Endothelial cell of umbilical vein (primary cell): ENCODE measurements at regions of chr21 and their contacts with region 1.

Region 1: GRCh38 chr21:31731802-31732596 is at the start of gene SCAF4:
- DNase-seq: peak; percentile 88
- H3K4me3 ChIP-seq: peak within 1 kb of the TSS; percentile 72 to 95 (median 79)
- H3K27ac ChIP-seq: peak within 1 kb of the TSS; percentile 66
- H3K4me1 ChIP-seq: peaks cover 28% of the 10 kb centered on the region
- H3K27me3 ChIP-seq: no peaks in the 10 kb centered on the region
- CTCF ChIP-seq: no peak
- POLR2A ChIP-seq: peak; percentile 89
- total RNA-seq, gene SCAF4: 41.2 and 42.0 TPM in 2 replicates

Region 2: GRCh38 chr21:31659536-31660258 is 72.3 kb before region 1 on chr21 and contains the start of gene SOD1:
- CTCF ChIA-PET with region 1: no interaction called
- POLR2A ChIA-PET with region 1: no interaction called
- dilution Hi-C with region 1: no loop called
- intact Hi-C with region 1: loop called (anchors 2 kb)
- DNase-seq: peak; percentile 92
- H3K4me3 ChIP-seq: peak within 1 kb of the TSS; percentile 73 to 92 (median 89)
- H3K27ac ChIP-seq: peak within 1 kb of the TSS; percentile 26
- H3K4me1 ChIP-seq: peaks cover 7% of the 10 kb centered on the region
- H3K27me3 ChIP-seq: no peaks in the 10 kb centered on the region
- CTCF ChIP-seq: peak in 1 of 2 donors; percentile 3
- POLR2A ChIP-seq: peak; percentile 96
- total RNA-seq, gene SOD1: 190 and 198 TPM in 2 replicates

Region 3: GRCh38 chr21:32278518-32279376 is 546.7 kb after region 1 on chr21 and contains the start of gene MIS18A:
- CTCF ChIA-PET with region 1: no interaction called
- POLR2A ChIA-PET with region 1: no interaction called
- dilution Hi-C with region 1: no loop called
- intact Hi-C with region 1: loop called (anchors 2 kb)
- DNase-seq: peak; percentile 97
- H3K4me3 ChIP-seq: peak within 1 kb of the TSS; percentile 63 to 90 (median 87)
- H3K27ac ChIP-seq: peak within 1 kb of the TSS; percentile 31
- H3K4me1 ChIP-seq: peaks cover 16% of the 10 kb centered on the region
- H3K27me3 ChIP-seq: no peaks in the 10 kb centered on the region
- CTCF ChIP-seq: no peak
- POLR2A ChIP-seq: peak; percentile 84
- total RNA-seq, gene MIS18A: 19.4 and 19.7 TPM in 2 replicates

Region 4: DNA sequence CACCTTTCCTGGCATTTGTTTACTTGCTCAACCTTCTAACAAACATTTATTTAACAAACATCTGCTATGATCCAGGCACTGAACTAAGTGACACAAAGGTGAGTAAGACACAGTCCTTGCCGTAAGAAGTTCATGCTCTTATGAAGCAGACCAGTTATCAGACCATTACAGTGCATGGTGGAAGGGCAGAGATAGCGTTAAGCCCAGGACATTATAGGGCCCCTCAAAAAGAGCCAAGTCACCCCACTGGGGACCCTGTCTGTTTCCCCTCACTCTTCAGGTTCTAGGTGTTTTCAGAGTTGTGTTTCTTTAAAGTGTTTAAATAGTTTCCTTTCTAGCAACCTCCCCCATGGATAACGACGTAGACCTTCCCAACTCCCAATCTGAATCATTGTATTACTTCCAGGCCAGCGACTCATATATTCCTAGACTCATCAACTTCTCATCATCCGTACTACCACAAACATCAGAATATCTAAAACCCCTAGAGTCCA is 814.0 kb after region 1 on chr21:
- CTCF ChIA-PET with region 1: no interaction called
- POLR2A ChIA-PET with region 1: no interaction called
- dilution Hi-C with region 1: no loop called
- intact Hi-C with region 1: loop called (anchors 5 kb)
- DNase-seq: peak; percentile 38
- H3K4me3 ChIP-seq: no peak overlapping the region
- H3K27ac ChIP-seq: peak overlapping the region; percentile 96
- H3K4me1 ChIP-seq: peaks cover 22% of the 10 kb centered on the region
- H3K27me3 ChIP-seq: no peaks in the 10 kb centered on the region
- CTCF ChIP-seq: no peak
- POLR2A ChIP-seq: no peak